K562 (cell line): ENCODE measurements at regions of chr1 and their contacts with region 1.

Region 1: GRCh38 chr1:112247036-112247597 is 148.9 kb upstream of the CTTNBP2NL start:
- DNase-seq: no peak
- ATAC-seq: no peak
- H3K4me3 ChIP-seq: no peak overlapping the region
- H3K27ac ChIP-seq: no peak overlapping the region
- H3K4me1 ChIP-seq: no peaks in the 10 kb centered on the region
- H3K27me3 ChIP-seq: peaks cover 0 to 3% of the 10 kb centered on the region in 2 experiments; a peak in 1 of 5 replicates
- CTCF ChIP-seq: no peak
- EP300 ChIP-seq: no peak
- POLR2A ChIP-seq: no peak
- RAD21 ChIP-seq: no peak

Region 2: DNA sequence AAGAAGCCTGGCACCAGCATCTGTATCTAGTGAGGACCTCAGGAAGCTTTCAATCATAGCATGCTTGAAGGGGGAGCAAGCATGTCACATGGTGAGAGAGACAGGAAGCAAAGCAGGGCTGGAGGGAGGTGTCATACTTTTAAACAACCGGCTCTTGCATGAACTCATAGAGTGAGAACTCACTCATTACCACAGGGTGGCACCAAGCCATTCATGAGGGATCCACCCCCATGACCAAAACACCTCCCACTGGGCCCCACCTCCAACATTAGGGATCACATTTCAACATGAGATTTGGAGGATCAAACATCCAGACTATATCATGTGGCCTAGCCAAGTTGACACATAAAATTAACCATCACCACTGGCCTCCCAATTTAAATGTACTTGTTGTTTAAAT is 132.6 kb before region 1 on chr1:
- CTCF ChIA-PET with region 1: no interaction called
- POLR2A ChIA-PET with region 1: no interaction called
- in situ Hi-C with region 1: no loop called
- intact Hi-C with region 1: no loop called
- DNase-seq: peak in 1 of 4 experiments; percentile 9
- ATAC-seq: peak; percentile 71
- H3K4me3 ChIP-seq: no peak overlapping the region
- H3K27ac ChIP-seq: no peak overlapping the region
- H3K4me1 ChIP-seq: no peaks in the 10 kb centered on the region
- H3K27me3 ChIP-seq: no peaks in the 10 kb centered on the region
- CTCF ChIP-seq: peak in 1 of 3 experiments; percentile 13; a peak in 3 of 6 replicates
- EP300 ChIP-seq: no peak
- POLR2A ChIP-seq: no peak
- RAD21 ChIP-seq: no peak

Region 3: GRCh38 chr1:112219267-112219666 is 27.9 kb before region 1 on chr1:
- CTCF ChIA-PET with region 1: no interaction called
- POLR2A ChIA-PET with region 1: no interaction called
- in situ Hi-C with region 1: no loop called
- intact Hi-C with region 1: no loop called
- DNase-seq: no peak
- ATAC-seq: no peak
- H3K4me3 ChIP-seq: no peak overlapping the region
- H3K27ac ChIP-seq: no peak overlapping the region
- H3K4me1 ChIP-seq: no peaks in the 10 kb centered on the region
- H3K27me3 ChIP-seq: no peaks in the 10 kb centered on the region
- CTCF ChIP-seq: no peak
- EP300 ChIP-seq: no peak
- POLR2A ChIP-seq: no peak
- RAD21 ChIP-seq: no peak

Region 4: GRCh38 chr1:112232848-112233247 is 14.3 kb before region 1 on chr1:
- CTCF ChIA-PET with region 1: no interaction called
- POLR2A ChIA-PET with region 1: interaction called, 12 read pairs
- in situ Hi-C with region 1: no loop called
- intact Hi-C with region 1: no loop called
- DNase-seq: no peak
- ATAC-seq: no peak
- H3K4me3 ChIP-seq: no peak overlapping the region
- H3K27ac ChIP-seq: no peak overlapping the region
- H3K4me1 ChIP-seq: no peaks in the 10 kb centered on the region
- H3K27me3 ChIP-seq: peaks cover 5 to 16% of the 10 kb centered on the region in 2 experiments; a peak in 3 of 5 replicates
- CTCF ChIP-seq: no peak
- EP300 ChIP-seq: no peak
- POLR2A ChIP-seq: no peak
- RAD21 ChIP-seq: no peak

Region 5: GRCh38 chr1:112418099-112418892 is 171.2 kb after region 1 on chr1:
- CTCF ChIA-PET with region 1: no interaction called
- POLR2A ChIA-PET with region 1: no interaction called
- in situ Hi-C with region 1: no loop called
- intact Hi-C with region 1: no loop called
- DNase-seq: no peak
- ATAC-seq: no peak
- H3K4me3 ChIP-seq: no peak overlapping the region
- H3K27ac ChIP-seq: no peak overlapping the region
- H3K4me1 ChIP-seq: no peaks in the 10 kb centered on the region
- H3K27me3 ChIP-seq: peaks cover 0 to 3% of the 10 kb centered on the region in 2 experiments; a peak in 1 of 5 replicates
- CTCF ChIP-seq: no peak
- EP300 ChIP-seq: no peak
- POLR2A ChIP-seq: no peak
- RAD21 ChIP-seq: no peak